ENCODE measurements at regions of chr4 and their contacts with region 1.

Region 1: DNA sequence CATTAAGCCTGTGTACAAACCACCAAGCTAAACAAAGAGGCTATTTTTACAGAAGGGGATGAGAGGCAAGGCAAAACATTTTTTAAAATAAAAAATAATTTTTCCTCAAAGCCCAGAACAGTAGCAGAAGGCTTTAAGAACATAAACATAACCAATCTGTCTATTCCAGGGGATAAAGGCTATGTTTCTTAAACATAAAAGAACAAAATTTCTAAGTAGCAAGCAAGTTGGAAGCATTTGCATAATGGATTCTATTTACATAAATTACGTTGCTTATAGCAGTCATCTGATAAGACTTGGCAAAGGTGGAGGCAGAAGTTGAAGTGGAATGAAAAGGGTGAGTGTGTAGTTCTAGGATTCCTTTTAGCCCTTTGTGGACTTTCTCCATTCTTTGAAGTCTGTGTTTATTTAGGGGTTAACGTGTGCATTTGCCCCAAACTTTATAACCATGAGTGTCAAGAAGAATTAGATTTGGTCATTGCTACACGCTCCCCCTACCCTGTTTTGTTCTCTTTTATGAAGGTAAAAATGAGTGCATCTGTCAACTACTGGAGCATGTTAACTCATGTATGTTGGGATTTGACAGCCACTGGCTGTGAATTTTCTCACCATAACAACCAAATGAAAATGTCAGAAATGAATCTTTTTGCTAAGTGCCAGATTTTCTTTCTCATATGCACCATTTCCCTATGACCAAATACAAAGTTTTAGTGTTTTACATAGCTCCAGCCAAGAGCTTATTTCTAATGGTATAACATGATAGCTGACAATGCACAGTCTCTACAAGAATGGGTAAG is 378.4 kb upstream of the IGFBP7 start:
- DNase-seq: no peak
- H3K4me3 ChIP-seq: no peak overlapping the region
- H3K27ac ChIP-seq: no peak overlapping the region
- H3K4me1 ChIP-seq: no peaks in the 10 kb centered on the region
- H3K27me3 ChIP-seq: no peaks in the 10 kb centered on the region
- CTCF ChIP-seq: no peak
- POLR2A ChIP-seq: no peak

Region 2: GRCh38 chr4:56215901-56216300 is 1272.7 kb before region 1 on chr4:
- intact Hi-C with region 1: loop called in 1 of 2 experiments (anchors 5 kb)
- DNase-seq: peak; percentile 28 to 66 (median 56)
- H3K4me3 ChIP-seq: no peak overlapping the region
- H3K27ac ChIP-seq: no peak overlapping the region
- H3K4me1 ChIP-seq: no peaks in the 10 kb centered on the region
- H3K27me3 ChIP-seq: no peaks in the 10 kb centered on the region
- CTCF ChIP-seq: no peak
- POLR2A ChIP-seq: no peak

Region 3: DNA sequence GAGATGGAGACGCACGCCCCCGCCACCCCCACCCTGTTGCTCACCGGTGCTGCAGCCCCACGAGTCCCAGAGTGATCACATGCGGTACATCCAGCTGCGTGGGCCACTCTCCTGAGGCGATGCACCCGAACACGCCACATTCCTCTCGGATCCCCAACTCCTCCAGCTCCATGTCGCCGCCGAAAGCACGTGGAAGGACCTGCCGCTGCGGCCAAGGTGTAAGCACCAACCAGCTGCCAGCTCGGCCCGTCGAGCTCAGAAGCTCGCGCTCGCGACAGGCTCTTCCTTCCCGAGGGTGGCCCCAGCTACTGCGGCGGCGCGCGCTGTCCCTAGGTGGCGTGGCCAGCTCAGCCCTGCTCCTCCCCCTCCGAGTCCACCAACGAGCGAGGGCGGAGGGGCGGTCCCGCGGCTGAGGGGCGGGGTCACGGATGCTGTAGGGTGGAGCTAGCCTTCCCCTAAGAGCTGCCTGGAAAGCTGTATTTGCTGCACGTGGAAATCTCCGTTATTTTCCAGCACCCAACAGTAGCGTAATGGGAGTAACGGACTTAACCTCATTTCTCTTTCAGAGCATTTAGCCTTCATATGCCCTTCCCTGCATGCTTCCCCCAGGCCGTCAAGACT is 1053.1 kb before region 1 on chr4 and contains the start of gene PPAT:
- intact Hi-C with region 1: no loop called
- DNase-seq: peak; percentile 98 to 99 (median 98)
- H3K4me3 ChIP-seq: peak within 1 kb of the TSS; percentile 46 to 84 (median 68)
- H3K27ac ChIP-seq: peak within 1 kb of the TSS; percentile 91 to 98 (median 92)
- H3K4me1 ChIP-seq: peaks cover 11 to 14% of the 10 kb centered on the region in 2 donors
- H3K27me3 ChIP-seq: no peaks in the 10 kb centered on the region
- CTCF ChIP-seq: peak; percentile 24 to 57 (median 41)
- POLR2A ChIP-seq: peak in 1 of 2 donors; percentile 83
- total RNA-seq, gene PPAT: 6.0 to 19.9 (median 14.3) TPM

Region 4: GRCh38 chr4:57333684-57334083 is 154.9 kb before region 1 on chr4:
- intact Hi-C with region 1: no loop called
- DNase-seq: no peak
- H3K4me3 ChIP-seq: no peak overlapping the region
- H3K27ac ChIP-seq: no peak overlapping the region
- H3K4me1 ChIP-seq: no peaks in the 10 kb centered on the region
- H3K27me3 ChIP-seq: no peaks in the 10 kb centered on the region
- CTCF ChIP-seq: no peak
- POLR2A ChIP-seq: no peak

Measured in adrenal gland (tissue), 19 donors.